Mammary epithelial cell (primary cell): ENCODE measurements at regions of chr17 and their contacts with region 1.

Region 1: GRCh38 chr17:49997791-49998703 is 3.0 kb upstream of the DLX3 start:
- DNase-seq: peak; percentile 68
- H3K4me3 ChIP-seq: no peak overlapping the region
- H3K27ac ChIP-seq: no peak overlapping the region
- H3K4me1 ChIP-seq: peaks cover 26% of the 10 kb centered on the region
- H3K27me3 ChIP-seq: no peaks in the 10 kb centered on the region
- CTCF ChIP-seq: peak; percentile 87 to 97

Region 2: DNA sequence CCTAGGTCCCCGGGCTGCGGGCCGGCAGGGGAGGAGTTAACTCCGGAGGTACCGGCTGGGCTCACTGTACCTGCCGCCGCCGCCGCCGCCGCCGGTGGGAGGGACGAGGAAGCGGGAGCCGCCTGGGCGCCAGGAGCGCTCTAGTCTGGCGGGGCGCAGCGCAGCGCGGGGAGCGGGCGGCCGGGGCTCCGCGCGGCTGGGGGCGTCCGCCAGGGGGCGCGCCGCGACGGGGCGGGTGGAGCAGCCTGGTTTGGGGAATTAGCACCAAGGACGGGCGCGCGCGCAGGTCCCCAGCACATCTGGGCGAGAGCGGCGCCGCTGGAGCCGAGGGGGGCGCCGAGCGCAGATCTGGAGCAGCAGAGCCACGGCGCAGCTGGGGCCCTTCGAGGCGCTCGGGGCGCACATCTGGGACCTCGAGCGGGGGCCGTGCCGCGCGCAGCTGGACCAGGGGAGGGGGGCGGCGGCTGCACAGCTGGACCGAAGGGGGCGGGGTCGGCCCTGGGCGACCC is 422.4 kb before region 1 on chr17 and contains the start of gene NXPH3:
- CTCF ChIA-PET with region 1: no interaction called
- dilution Hi-C with region 1: no loop called
- in situ Hi-C with region 1: loop called in 1 of 2 experiments (anchors 10 kb)
- intact Hi-C with region 1: loop called (anchors 1 kb)
- DNase-seq: peak; percentile 59
- H3K4me3 ChIP-seq: peak within 1 kb of the TSS; percentile 58 to 60 (median 59)
- H3K27ac ChIP-seq: no peak within 1 kb of the TSS
- H3K4me1 ChIP-seq: peaks cover 11% of the 10 kb centered on the region
- H3K27me3 ChIP-seq: no peaks in the 10 kb centered on the region
- CTCF ChIP-seq: peak; percentile 40 to 45
- total RNA-seq, gene NXPH3: 0.33 to 0.35 TPM

Region 3: GRCh38 chr17:49707608-49708514 is 290.2 kb before region 1 on chr17 and contains the start of gene SLC35B1:
- CTCF ChIA-PET with region 1: interaction called, 4 read pairs
- dilution Hi-C with region 1: no loop called
- in situ Hi-C with region 1: loop called in 1 of 2 experiments (anchors 10 kb)
- intact Hi-C with region 1: loop called (anchors 1 kb)
- DNase-seq: peak; percentile 98
- H3K4me3 ChIP-seq: peak within 1 kb of the TSS; percentile 82 to 94 (median 87)
- H3K27ac ChIP-seq: peak within 1 kb of the TSS; percentile 89
- H3K4me1 ChIP-seq: peaks cover 16% of the 10 kb centered on the region
- H3K27me3 ChIP-seq: no peaks in the 10 kb centered on the region
- CTCF ChIP-seq: peak; percentile 92 to 96
- total RNA-seq, gene SLC35B1: 35.5 to 55.9 TPM

Region 4: GRCh38 chr17:49880291-49881053 is 117.6 kb before region 1 on chr17:
- CTCF ChIA-PET with region 1: interaction called, 10 read pairs
- dilution Hi-C with region 1: no loop called
- in situ Hi-C with region 1: no loop called
- intact Hi-C with region 1: loop called (anchors 1 kb)
- DNase-seq: peak; percentile 36
- H3K4me3 ChIP-seq: no peak overlapping the region
- H3K27ac ChIP-seq: no peak overlapping the region
- H3K4me1 ChIP-seq: no peaks in the 10 kb centered on the region
- H3K27me3 ChIP-seq: peaks cover 2% of the 10 kb centered on the region
- CTCF ChIP-seq: peak; percentile 86 to 98

Region 5: GRCh38 chr17:49952209-49952911 is 45.7 kb before region 1 on chr17:
- CTCF ChIA-PET with region 1: interaction called, 11 read pairs
- dilution Hi-C with region 1: loop called (anchors 5 kb)
- in situ Hi-C with region 1: loop called (anchors 5 kb)
- intact Hi-C with region 1: loop called (anchors 1 kb)
- DNase-seq: peak; percentile 66
- H3K4me3 ChIP-seq: no peak overlapping the region
- H3K27ac ChIP-seq: no peak overlapping the region
- H3K4me1 ChIP-seq: no peaks in the 10 kb centered on the region
- H3K27me3 ChIP-seq: peaks cover 4% of the 10 kb centered on the region
- CTCF ChIP-seq: peak; percentile 97 to 99

Region 6: DNA sequence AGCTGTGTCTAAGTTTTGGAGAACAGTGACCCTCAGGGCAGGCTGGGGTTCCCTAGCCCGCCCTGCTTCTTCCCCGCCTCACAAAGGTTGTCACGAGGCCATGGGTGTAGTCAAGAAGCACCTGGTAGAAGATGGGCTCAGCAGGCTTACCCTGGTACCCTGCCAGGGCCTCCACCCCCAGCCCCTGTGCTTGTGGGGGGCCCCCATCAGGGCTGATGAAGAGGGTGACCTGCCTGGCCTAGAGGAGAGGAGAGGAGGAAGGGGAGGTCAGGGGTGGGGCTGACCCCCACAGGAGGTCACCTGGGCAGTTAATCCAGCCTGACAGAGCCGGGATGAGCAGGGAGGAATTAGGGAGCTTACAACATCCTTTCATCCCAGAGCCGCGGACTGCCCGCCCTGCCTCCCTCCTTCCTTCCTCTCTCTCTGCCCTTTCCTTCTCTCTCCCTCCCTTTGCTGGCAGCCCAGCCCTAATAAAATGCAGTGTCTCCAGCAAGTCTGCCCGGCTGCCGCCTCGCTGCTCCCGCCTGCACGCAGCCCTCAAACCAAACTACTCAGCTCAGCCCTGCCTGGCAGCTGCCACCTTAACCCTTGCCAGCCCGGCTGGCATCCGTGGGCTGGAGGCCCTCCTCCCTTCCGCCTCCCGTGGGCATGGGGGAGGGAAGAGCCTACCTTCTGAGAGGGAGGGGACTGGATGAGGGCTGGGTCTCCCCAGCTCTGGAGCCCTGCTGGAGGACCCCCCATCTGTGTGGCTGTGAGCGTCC is 10.2 kb before region 1 on chr17:
- CTCF ChIA-PET with region 1: no interaction called
- dilution Hi-C with region 1: no loop called
- in situ Hi-C with region 1: no loop called
- intact Hi-C with region 1: no loop called
- DNase-seq: peak; percentile 42
- H3K4me3 ChIP-seq: no peak overlapping the region
- H3K27ac ChIP-seq: no peak overlapping the region
- H3K4me1 ChIP-seq: peaks cover 13% of the 10 kb centered on the region
- H3K27me3 ChIP-seq: no peaks in the 10 kb centered on the region
- CTCF ChIP-seq: no peak

Region 7: DNA sequence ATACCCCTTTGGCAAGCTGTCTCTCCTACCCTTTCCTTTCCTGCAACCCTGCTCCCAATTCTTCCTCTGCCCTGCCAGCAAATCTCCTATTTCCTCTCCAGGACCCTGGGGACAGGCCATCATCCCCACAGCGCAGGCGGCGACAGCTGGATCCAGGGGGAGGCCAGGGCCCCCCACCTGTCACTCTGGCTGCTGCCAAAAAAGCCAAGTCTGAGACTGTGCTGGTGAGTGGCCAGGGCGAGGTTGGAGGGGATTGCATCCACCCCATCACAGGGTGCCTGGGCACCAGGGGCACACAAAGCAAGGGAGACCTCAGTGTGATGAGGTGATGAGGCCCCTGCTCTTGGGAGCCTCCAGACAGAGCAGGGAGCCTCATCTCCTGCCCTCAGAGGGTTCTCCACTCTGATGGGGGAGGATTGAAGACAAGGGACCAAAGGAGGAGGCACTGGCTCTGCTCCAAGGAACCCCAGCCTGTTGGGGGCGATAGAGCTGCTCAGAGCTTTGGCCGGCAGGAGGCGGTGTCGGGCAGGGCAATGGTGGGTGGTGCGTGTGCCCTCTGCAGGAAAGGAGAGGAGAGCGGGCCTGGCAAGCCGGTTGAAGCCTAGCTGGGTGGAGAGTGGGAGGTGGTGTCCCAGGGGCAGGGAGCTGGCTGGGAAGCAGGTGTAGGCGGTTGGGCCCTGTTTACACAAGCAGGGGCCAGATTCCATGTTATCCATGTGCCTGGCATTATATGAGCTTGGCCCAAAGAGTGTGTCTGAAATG is 81.5 kb after region 1 on chr17:
- CTCF ChIA-PET with region 1: no interaction called
- dilution Hi-C with region 1: loop called (anchors 10 kb)
- in situ Hi-C with region 1: no loop called
- intact Hi-C with region 1: no loop called
- DNase-seq: peak; percentile 53
- H3K4me3 ChIP-seq: no peak overlapping the region
- H3K27ac ChIP-seq: no peak overlapping the region
- H3K4me1 ChIP-seq: no peaks in the 10 kb centered on the region
- H3K27me3 ChIP-seq: no peaks in the 10 kb centered on the region
- CTCF ChIP-seq: peak; percentile 94 to 98

Region 8: GRCh38 chr17:50186661-50187393 is 188.8 kb after region 1 on chr17:
- CTCF ChIA-PET with region 1: no interaction called
- dilution Hi-C with region 1: no loop called
- in situ Hi-C with region 1: no loop called
- intact Hi-C with region 1: no loop called
- DNase-seq: no peak
- H3K4me3 ChIP-seq: no peak overlapping the region
- H3K27ac ChIP-seq: no peak overlapping the region
- H3K4me1 ChIP-seq: peaks cover 2% of the 10 kb centered on the region
- H3K27me3 ChIP-seq: no peaks in the 10 kb centered on the region
- CTCF ChIP-seq: no peak